ENCODE measurements at regions of chr1 and their contacts with region 1.

Region 1: GRCh38 chr1:11654137-11654938 is at the starts of genes FBXO2 and FBXO44:
- DNase-seq: peak; percentile 62
- ATAC-seq: peak; percentile 74
- H3K4me3 ChIP-seq: peak within 1 kb of the TSS; percentile 81 to 89 (median 85)
- H3K27ac ChIP-seq: peak within 1 kb of the TSS; percentile 74
- H3K4me1 ChIP-seq: peaks cover 59% of the 10 kb centered on the region
- H3K27me3 ChIP-seq: no peaks in the 10 kb centered on the region
- CTCF ChIP-seq: 0 out of 2 replicates have a peak, but pooled peaks have one; percentile 2
- EP300 ChIP-seq: peak in 1 of 2 experiments; percentile 36; a peak in 1 of 4 replicates
- POLR2A ChIP-seq: peak; percentile 51 to 86; a peak in 3 of 4 replicates
- RAD21 ChIP-seq: no peak
- total RNA-seq, gene FBXO2: 112 and 118 TPM in 2 replicates
- total RNA-seq, gene FBXO44: 13.4 and 22.4 TPM in 2 replicates

Region 2: GRCh38 chr1:11413986-11414391 is 240.3 kb before region 1 on chr1:
- CTCF ChIA-PET with region 1: no interaction called
- POLR2A ChIA-PET with region 1: no interaction called
- in situ Hi-C with region 1: no loop called
- intact Hi-C with region 1: no loop called
- DNase-seq: no peak
- ATAC-seq: no peak
- H3K4me3 ChIP-seq: no peak overlapping the region
- H3K27ac ChIP-seq: no peak overlapping the region
- H3K4me1 ChIP-seq: no peaks in the 10 kb centered on the region
- H3K27me3 ChIP-seq: peaks cover 2 to 27% of the 10 kb centered on the region in 2 experiments; a peak in 4 of 5 replicates
- CTCF ChIP-seq: no peak
- EP300 ChIP-seq: no peak
- POLR2A ChIP-seq: no peak
- RAD21 ChIP-seq: no peak

Region 3: GRCh38 chr1:11671544-11672286 is 17.4 kb after region 1 on chr1:
- CTCF ChIA-PET with region 1: no interaction called
- POLR2A ChIA-PET with region 1: interaction called, 15 read pairs
- in situ Hi-C with region 1: no loop called
- intact Hi-C with region 1: no loop called
- DNase-seq: peak; percentile 88
- ATAC-seq: peak; percentile 85
- H3K4me3 ChIP-seq: peak overlapping the region; percentile 4 to 53 (median 7); a peak in 3 of 6 replicates
- H3K27ac ChIP-seq: peak overlapping the region; percentile 84
- H3K4me1 ChIP-seq: peaks cover 35% of the 10 kb centered on the region
- H3K27me3 ChIP-seq: no peaks in the 10 kb centered on the region
- CTCF ChIP-seq: no peak
- EP300 ChIP-seq: peak in 1 of 2 experiments; percentile 67; a peak in 2 of 4 replicates
- POLR2A ChIP-seq: peak; percentile 45 to 54; a peak in 3 of 4 replicates
- RAD21 ChIP-seq: 0 out of 2 replicates have a peak, but pooled peaks have one; percentile 20

Region 4: DNA sequence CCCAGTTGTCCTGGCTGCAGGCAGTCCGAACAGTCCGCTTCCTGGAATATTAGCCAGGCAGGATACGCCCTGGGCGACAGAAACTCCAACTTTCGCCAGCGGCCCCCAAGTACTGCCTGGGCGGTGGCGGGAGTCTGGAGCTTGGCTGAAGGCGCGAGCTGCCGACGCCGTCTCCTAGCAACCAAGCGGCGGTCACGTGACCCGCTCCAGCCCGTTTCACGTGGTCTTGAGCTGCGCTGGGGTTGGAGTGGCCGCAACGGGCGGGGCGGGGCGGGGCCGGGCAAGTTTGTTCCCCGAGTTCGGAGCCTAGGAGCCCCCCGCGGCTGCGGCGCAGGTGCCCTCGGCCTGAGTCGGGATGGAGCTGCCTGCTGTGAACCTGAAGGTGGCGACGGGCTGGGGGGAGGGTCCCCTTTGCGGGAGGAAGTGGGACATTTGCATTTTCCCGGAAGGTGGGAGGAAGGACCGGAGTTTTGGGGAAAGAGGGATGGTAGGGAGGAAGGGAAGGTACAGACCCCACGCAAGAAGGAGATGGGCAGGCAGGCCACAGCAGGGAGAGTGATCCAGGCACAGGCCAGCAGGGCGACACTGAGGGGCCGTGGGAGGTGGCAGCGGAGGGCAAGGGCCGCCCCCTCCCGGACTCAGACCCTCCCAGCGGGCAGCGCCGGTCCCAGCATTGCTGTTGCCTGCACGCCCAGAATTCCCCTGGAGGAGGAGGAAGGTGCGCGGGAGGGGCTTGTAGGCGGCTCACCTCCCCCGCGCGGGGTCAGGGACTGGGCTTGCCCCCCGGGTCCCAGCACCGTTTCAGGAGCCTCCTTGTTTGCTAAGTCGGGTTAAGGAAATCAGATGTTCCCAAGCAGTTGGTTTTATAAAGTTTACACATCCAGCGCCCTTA is 81.8 kb after region 1 on chr1 and contains the start of gene AGTRAP:
- CTCF ChIA-PET with region 1: no interaction called
- POLR2A ChIA-PET with region 1: interaction called, 14 read pairs
- in situ Hi-C with region 1: no loop called
- intact Hi-C with region 1: no loop called
- DNase-seq: peak; percentile 82
- ATAC-seq: peak; percentile 89
- H3K4me3 ChIP-seq: peak within 1 kb of the TSS; percentile 86 to 99 (median 98)
- H3K27ac ChIP-seq: peak within 1 kb of the TSS; percentile 71
- H3K4me1 ChIP-seq: peaks cover 51% of the 10 kb centered on the region
- H3K27me3 ChIP-seq: peaks cover 0 to 3% of the 10 kb centered on the region in 2 experiments; a peak in 2 of 5 replicates
- CTCF ChIP-seq: peak; percentile 45; the same call in 1 of the 2 replicates
- EP300 ChIP-seq: peak in 1 of 2 experiments; percentile 15; a peak in 1 of 4 replicates
- POLR2A ChIP-seq: peak; percentile 24 to 36; a peak in 1 of 4 replicates
- RAD21 ChIP-seq: no peak
- total RNA-seq, gene AGTRAP: 15.7 and 32.0 TPM in 2 replicates

Measured in HepG2 (cell line).